WTC11 (cell line): ENCODE measurements at regions of chr22 and their contacts with region 1.

Region 1: GRCh38 chr22:36239401-36240171 is at the start of gene APOL2:
- DNase-seq: peak; percentile 85
- ATAC-seq: peak; percentile 99
- H3K4me3 Mint-ChIP-seq: peak within 1 kb of the TSS; percentile 87
- H3K27ac Mint-ChIP-seq: peak within 1 kb of the TSS; percentile 98
- H3K4me1 Mint-ChIP-seq: peaks cover 21% of the 10 kb centered on the region
- H3K27me3 Mint-ChIP-seq: peaks cover 6% of the 10 kb centered on the region; the same call in 1 of the 2 replicates
- CTCF ChIP-seq: no peak
- total RNA-seq, gene APOL2: 11.2 to 12.5 TPM (median 12.4 TPM) in 3 replicates

Region 2: GRCh38 chr22:36171941-36172340 is 67.6 kb before region 1 on chr22:
- CTCF ChIA-PET with region 1: no interaction called
- POLR2A ChIA-PET with region 1: no interaction called
- DNase-seq: no peak
- ATAC-seq: peak; percentile 87
- H3K4me3 Mint-ChIP-seq: no peak overlapping the region
- H3K27ac Mint-ChIP-seq: peak overlapping the region; percentile 22; the same call in 1 of the 2 replicates
- H3K4me1 Mint-ChIP-seq: peaks cover 15% of the 10 kb centered on the region
- H3K27me3 Mint-ChIP-seq: no peaks in the 10 kb centered on the region
- CTCF ChIP-seq: no peak

Region 3: DNA sequence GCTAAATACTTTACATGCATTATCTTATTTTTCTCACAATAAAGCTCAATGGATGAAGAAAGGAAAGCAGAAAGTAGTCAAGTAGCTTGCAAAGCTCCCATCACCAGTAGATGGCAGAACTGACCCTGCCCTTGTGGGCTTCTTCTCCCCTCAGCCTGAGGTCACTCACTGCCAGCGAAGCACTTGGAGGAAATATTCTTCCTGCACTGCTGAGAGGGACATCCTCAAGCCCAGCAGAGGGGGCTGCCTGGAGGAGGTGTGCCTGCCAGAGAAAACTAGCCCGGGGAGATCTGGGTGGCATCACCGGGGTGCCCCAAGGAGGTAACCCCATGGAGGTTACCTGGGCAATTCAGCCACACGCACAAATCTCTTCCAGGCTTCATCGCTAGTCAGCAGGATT is 44.6 kb before region 1 on chr22:
- CTCF ChIA-PET with region 1: interaction called, 21 read pairs
- POLR2A ChIA-PET with region 1: no interaction called
- DNase-seq: peak; percentile 73
- ATAC-seq: peak; percentile 86
- H3K4me3 Mint-ChIP-seq: no peak overlapping the region
- H3K27ac Mint-ChIP-seq: no peak overlapping the region
- H3K4me1 Mint-ChIP-seq: peaks cover 46% of the 10 kb centered on the region
- H3K27me3 Mint-ChIP-seq: peaks cover 4% of the 10 kb centered on the region
- CTCF ChIP-seq: peak; percentile 31

Region 4: GRCh38 chr22:36227386-36227785 is 12.2 kb before region 1 on chr22:
- CTCF ChIA-PET with region 1: interaction called, 11 read pairs
- POLR2A ChIA-PET with region 1: no interaction called
- DNase-seq: no peak
- ATAC-seq: no peak
- H3K4me3 Mint-ChIP-seq: no peak overlapping the region
- H3K27ac Mint-ChIP-seq: no peak overlapping the region
- H3K4me1 Mint-ChIP-seq: peaks cover 15% of the 10 kb centered on the region
- H3K27me3 Mint-ChIP-seq: no peaks in the 10 kb centered on the region
- CTCF ChIP-seq: no peak

Region 5: DNA sequence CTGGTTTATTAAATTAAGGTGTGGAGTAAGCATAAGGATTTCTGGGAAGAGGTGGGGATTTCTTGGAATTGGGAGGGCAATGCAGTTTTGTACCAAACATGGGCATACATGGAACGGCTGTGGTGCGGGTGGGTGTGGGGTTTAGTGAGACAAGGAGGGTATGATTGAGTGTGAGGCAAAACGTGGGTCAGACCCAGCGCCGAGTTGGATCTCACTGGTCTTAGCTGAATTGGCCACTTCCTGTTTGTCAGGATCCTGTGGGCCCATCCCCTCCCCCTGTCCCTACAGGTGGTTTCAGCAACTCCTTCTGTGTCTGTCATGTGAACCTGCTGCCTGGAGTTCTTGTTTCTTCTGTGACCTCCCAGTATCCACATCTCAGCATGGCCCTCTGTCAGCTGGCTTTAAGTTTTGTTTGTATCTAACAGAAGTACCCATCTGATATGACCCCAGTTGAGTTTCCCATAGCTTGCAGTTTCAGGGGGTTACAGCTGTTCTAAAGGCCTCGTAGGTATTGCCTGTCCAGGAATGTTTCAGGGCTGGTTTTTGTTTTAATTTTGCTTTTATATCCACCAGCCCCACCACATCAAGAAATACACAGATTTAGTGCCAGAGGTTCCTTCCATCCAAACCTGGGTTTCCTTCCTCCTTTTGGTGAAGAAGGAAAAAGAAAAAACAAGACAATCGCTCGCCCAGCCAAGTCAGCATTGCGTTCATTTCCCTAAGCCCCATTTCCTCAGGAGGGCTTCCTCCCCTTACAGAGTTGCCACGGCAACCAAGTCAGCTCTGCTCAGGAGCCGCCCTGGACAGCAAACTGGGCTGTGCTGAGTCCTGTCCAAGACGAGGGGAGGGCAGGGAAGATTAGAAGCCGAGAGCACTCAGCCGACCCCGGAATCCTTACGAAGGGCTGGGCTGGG is 19.4 kb after region 1 on chr22:
- CTCF ChIA-PET with region 1: interaction called, 25 read pairs
- POLR2A ChIA-PET with region 1: interaction called, 9 read pairs
- DNase-seq: peak; percentile 64
- ATAC-seq: peak; percentile 90
- H3K4me3 Mint-ChIP-seq: peak overlapping the region; percentile 25
- H3K27ac Mint-ChIP-seq: peak overlapping the region; percentile 94
- H3K4me1 Mint-ChIP-seq: peaks cover 35% of the 10 kb centered on the region
- H3K27me3 Mint-ChIP-seq: no peaks in the 10 kb centered on the region; the same call in 1 of the 2 replicates
- CTCF ChIP-seq: no peak

Region 6: GRCh38 chr22:36277482-36278291 is 38.1 kb after region 1 on chr22:
- CTCF ChIA-PET with region 1: interaction called, 15 read pairs
- POLR2A ChIA-PET with region 1: no interaction called
- DNase-seq: peak; percentile 74
- ATAC-seq: peak; percentile 94
- H3K4me3 Mint-ChIP-seq: no peak overlapping the region; the same call in 1 of the 2 replicates
- H3K27ac Mint-ChIP-seq: peak overlapping the region; percentile 72
- H3K4me1 Mint-ChIP-seq: peaks cover 11% of the 10 kb centered on the region
- H3K27me3 Mint-ChIP-seq: no peaks in the 10 kb centered on the region
- CTCF ChIP-seq: peak; percentile 75